ENCODE measurements at regions of chr1 and their contacts with region 1.

Region 1: DNA sequence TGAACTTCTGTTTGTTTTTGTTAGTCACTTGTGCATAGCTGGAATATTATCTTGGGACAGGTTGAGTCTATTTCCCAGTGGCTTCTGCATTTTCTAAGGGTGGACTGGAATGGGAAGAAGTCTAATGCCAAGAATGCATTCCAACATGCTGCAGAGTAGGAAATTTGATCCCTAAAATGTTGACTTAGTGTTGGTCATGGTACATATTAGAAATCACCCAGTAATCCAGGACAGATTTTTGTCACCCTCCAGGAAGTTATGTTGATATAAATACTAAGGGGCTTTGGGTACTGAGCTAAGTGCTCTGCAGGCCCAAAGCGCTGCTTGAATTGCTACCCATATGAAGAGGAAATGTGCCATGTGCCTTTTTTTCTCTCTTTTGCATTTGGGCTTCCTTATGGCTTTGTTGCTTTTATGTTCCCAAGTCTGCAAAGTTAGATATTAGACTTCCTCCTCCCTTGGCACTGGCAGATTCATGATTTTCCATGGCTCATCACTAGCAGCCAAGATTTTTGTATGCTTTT is 10.0 kb downstream of the ARID1A start:
- DNase-seq: no peak
- H3K4me3 ChIP-seq: peak overlapping the region; percentile 8 to 19
- H3K4me3 Mint-ChIP-seq: peak overlapping the region in 7 of 8 donors; percentile 64 to 82 (median 68)
- H3K27ac ChIP-seq: peak overlapping the region; percentile 18
- H3K27ac Mint-ChIP-seq: peak overlapping the region; percentile 8 to 81 (median 70)
- H3K4me1 ChIP-seq: peaks cover 71% of the 10 kb centered on the region
- H3K4me1 Mint-ChIP-seq: peaks cover 15 to 41% (median 27%) of the 10 kb centered on the region in 4 donors
- H3K27me3 ChIP-seq: no peaks in the 10 kb centered on the region
- H3K27me3 Mint-ChIP-seq: no peaks in the 10 kb centered on the region

Region 2: DNA sequence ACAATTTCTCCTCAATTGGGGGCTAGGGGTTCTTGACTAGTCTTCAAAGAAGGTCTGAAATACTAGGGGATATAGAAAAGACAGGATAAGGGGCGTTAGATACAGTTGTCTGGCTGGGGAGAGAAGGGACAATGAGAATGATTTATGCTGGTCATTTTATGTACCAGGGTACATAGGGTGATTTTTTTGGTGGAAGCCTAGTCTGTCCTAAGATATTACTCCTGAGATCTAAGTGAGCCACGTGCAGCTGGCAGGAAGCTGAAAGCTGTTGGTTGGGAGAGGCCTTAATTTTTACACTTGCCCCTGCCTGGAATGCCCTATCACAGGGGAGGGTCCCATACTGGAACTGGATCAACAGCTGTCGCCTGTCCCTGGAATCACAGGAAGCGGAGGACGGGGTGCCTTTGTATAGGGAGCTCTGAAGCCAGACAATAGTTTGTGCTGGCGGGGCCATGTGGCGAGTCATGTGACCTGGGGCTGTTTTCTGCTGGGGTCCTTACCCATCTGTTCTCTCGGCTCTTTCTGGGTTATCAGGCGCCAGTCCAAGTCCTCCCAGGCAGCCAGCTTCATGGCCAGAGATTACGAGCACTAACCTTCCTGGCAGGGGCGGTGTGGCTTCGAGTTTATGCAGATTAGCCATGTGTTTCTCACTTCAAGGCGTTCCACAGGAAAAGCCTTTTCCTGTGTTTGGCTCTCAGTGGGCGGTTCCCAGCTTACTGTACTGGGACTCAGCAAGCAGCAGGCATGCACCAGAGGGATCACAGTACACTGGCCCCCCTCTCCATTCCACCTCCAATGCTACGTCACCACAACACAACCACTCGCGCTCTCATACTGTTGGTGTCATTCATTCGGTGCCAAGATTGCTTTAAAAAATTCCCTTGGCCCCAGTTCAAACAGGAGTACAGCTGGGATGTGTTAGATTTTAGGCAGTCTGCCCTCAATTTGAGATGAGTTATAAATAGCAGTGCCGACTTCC is 17.5 kb after region 1 on chr1:
- CTCF ChIA-PET with region 1: interaction called, 7 read pairs
- POLR2A ChIA-PET with region 1: interaction called, 29 read pairs
- intact Hi-C with region 1: loop called (anchors 2 kb)
- DNase-seq: peak; percentile 25 to 81 (median 31)
- H3K4me3 ChIP-seq: peak overlapping the region in 1 of 2 donors; percentile 44
- H3K4me3 Mint-ChIP-seq: peak overlapping the region; percentile 44 to 87 (median 74)
- H3K27ac ChIP-seq: peak overlapping the region; percentile 23
- H3K27ac Mint-ChIP-seq: peak overlapping the region; percentile 62 to 92 (median 78)
- H3K4me1 ChIP-seq: peaks cover 96% of the 10 kb centered on the region
- H3K4me1 Mint-ChIP-seq: peaks cover 77 to 94% (median 84%) of the 10 kb centered on the region in 4 donors
- H3K27me3 ChIP-seq: no peaks in the 10 kb centered on the region
- H3K27me3 Mint-ChIP-seq: no peaks in the 10 kb centered on the region

Measured in CD4-positive, alpha-beta memory T cell (primary cell).